ENCODE measurements at regions of chr4 and their contacts with region 1.

Region 1: GRCh38 chr4:104743215-104743653 is 248.5 kb upstream of the CXXC4 start:
- DNase-seq: no peak
- ATAC-seq: peak; percentile 87
- H3K4me3 Mint-ChIP-seq: peak overlapping the region; percentile 42
- H3K27ac Mint-ChIP-seq: peak overlapping the region; percentile 83
- H3K4me1 Mint-ChIP-seq: peaks cover 22% of the 10 kb centered on the region
- H3K27me3 Mint-ChIP-seq: peaks cover 2% of the 10 kb centered on the region
- CTCF ChIP-seq: no peak

Region 2: GRCh38 chr4:104719539-104720230 is 23.5 kb before region 1 on chr4:
- CTCF ChIA-PET with region 1: no interaction called
- POLR2A ChIA-PET with region 1: no interaction called
- intact Hi-C with region 1: loop called (anchors 2 kb)
- DNase-seq: no peak
- ATAC-seq: no peak
- H3K4me3 Mint-ChIP-seq: no peak overlapping the region
- H3K27ac Mint-ChIP-seq: no peak overlapping the region
- H3K4me1 Mint-ChIP-seq: no peaks in the 10 kb centered on the region
- H3K27me3 Mint-ChIP-seq: no peaks in the 10 kb centered on the region
- CTCF ChIP-seq: no peak

Region 3: DNA sequence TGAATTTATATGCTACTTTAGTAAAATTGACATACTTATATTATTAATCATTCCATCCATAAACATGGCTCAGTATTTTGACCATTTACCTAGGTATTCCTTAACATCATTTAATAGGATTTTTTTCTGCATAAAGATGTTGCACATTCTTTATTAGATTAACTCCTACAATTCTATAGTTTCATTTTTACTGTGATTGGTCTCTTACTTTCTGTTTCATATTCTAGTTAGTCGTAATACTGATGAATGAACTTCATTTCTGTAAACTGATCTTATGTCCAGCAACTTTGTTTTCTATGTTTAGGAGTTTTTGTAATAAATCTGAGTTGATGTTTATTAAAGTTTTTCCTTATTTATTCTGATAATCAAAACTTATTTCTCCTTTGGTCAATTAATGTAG is 29.6 kb after region 1 on chr4:
- CTCF ChIA-PET with region 1: no interaction called
- POLR2A ChIA-PET with region 1: no interaction called
- intact Hi-C with region 1: loop called (anchors 2 kb)
- DNase-seq: no peak
- ATAC-seq: no peak
- H3K4me3 Mint-ChIP-seq: no peak overlapping the region
- H3K27ac Mint-ChIP-seq: no peak overlapping the region
- H3K4me1 Mint-ChIP-seq: peaks cover 23% of the 10 kb centered on the region
- H3K27me3 Mint-ChIP-seq: no peaks in the 10 kb centered on the region
- CTCF ChIP-seq: no peak